GM12878 (cell line): ENCODE measurements at regions of chr18 and their contacts with region 1.

Region 1: GRCh38 chr18:70082430-70082829 is 123.1 kb downstream of the RTTN start:
- DNase-seq: no peak
- ATAC-seq: no peak
- H3K4me3 ChIP-seq: no peak overlapping the region
- H3K27ac ChIP-seq: no peak overlapping the region
- H3K4me1 ChIP-seq: no peaks in the 10 kb centered on the region
- H3K27me3 ChIP-seq: no peaks in the 10 kb centered on the region
- CTCF ChIP-seq: no peak
- EP300 ChIP-seq: no peak
- POLR2A ChIP-seq: no peak
- RAD21 ChIP-seq: no peak

Region 2: DNA sequence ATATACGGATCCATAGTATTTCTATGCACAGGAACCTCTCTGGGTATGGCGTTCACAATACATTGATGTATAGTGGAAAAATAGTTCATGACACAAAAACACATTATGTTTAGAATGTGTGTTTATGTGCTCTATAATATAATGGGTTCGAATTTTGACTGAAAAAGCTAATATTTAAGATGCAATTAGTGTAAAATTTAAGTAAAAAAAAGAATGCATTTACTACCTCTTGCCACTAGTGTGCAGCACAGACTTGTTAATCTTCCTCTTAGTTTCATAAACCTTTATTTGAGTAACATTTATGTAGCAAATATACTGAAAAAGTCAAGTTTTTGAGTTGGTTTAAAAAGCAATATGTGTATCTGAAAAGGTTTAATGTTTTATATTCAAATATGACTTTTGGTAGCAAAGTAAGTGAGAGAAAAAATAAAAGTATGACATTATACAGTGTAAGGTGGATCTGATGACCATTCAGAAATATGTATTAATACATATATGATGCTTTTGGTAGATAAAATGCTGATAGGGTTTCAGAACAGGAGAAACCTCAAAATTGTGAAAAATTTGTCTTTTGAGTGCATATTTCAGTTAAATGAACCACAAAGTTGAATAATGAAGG is 1235.1 kb before region 1 on chr18:
- CTCF ChIA-PET with region 1: interaction called, 7 read pairs
- POLR2A ChIA-PET with region 1: no interaction called
- RAD21 ChIA-PET with region 1: no interaction called
- SMC1A ChIA-PET with region 1: interaction called, 8 read pairs
- in situ Hi-C with region 1: no loop called
- intact Hi-C with region 1: loop called (anchors 2 kb)
- DNase-seq: no peak
- ATAC-seq: peak; percentile 33; the same call in 1 of the 3 replicates
- H3K4me3 ChIP-seq: no peak overlapping the region
- H3K27ac ChIP-seq: no peak overlapping the region
- H3K4me1 ChIP-seq: no peaks in the 10 kb centered on the region
- H3K27me3 ChIP-seq: no peaks in the 10 kb centered on the region
- CTCF ChIP-seq: peak; percentile 46 to 64 (median 50); a peak in 4 of 6 replicates
- EP300 ChIP-seq: no peak
- POLR2A ChIP-seq: no peak
- RAD21 ChIP-seq: peak; percentile 67

Region 3: GRCh38 chr18:68925268-68925667 is 1157.2 kb before region 1 on chr18:
- CTCF ChIA-PET with region 1: interaction called, 13 read pairs
- POLR2A ChIA-PET with region 1: no interaction called
- RAD21 ChIA-PET with region 1: interaction called, 5 read pairs
- SMC1A ChIA-PET with region 1: interaction called, 13 read pairs
- in situ Hi-C with region 1: no loop called
- intact Hi-C with region 1: loop called (anchors 10 kb)
- DNase-seq: no peak
- ATAC-seq: peak; percentile 94
- H3K4me3 ChIP-seq: no peak overlapping the region
- H3K27ac ChIP-seq: no peak overlapping the region
- H3K4me1 ChIP-seq: no peaks in the 10 kb centered on the region
- H3K27me3 ChIP-seq: no peaks in the 10 kb centered on the region; a peak in 1 of 4 replicates
- CTCF ChIP-seq: peak; percentile 27 to 61 (median 46); a peak in 4 of 6 replicates
- EP300 ChIP-seq: no peak
- POLR2A ChIP-seq: no peak
- RAD21 ChIP-seq: peak; percentile 68

Region 4: DNA sequence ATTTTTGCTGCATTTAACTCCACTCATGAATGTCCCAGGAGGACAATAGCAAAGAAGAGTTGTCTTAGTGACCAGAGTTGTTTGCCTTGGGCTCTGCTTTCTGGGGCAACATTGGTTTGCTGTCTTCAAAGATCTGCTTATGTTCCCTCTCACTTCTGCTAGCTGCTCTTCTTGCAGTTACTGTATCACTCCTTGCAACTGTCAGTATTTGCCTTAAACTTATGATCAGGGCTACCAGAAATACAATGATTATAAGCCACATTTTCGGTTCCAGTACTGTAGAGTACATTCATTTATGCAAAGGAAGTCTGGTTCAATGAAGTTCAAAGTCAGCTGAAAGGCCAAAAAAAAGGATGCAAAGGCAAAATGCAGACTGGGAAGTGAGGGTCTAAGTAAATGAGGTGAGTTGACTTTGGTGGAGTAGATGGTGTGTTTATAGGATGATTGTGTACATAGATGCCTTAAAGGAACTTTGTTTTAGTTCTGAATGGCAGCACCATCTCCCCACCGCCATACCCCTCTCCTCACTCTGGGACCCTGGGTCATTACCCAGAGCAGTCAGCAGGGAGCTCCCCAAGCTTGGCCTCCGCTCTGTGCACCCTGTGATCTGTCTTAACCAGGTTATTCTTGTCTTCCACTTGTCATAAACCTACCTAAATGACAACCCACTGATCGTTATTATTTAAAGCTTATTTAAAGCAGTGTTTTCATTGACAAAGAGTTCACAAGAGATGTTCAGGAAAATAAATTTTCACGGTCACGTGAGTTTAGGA is 445.7 kb before region 1 on chr18:
- CTCF ChIA-PET with region 1: interaction called, 25 read pairs
- POLR2A ChIA-PET with region 1: no interaction called
- RAD21 ChIA-PET with region 1: interaction called, 7 read pairs
- SMC1A ChIA-PET with region 1: interaction called, 11 read pairs
- in situ Hi-C with region 1: no loop called
- intact Hi-C with region 1: loop called (anchors 2 kb)
- DNase-seq: no peak
- ATAC-seq: peak; percentile 95
- H3K4me3 ChIP-seq: no peak overlapping the region
- H3K27ac ChIP-seq: no peak overlapping the region
- H3K4me1 ChIP-seq: no peaks in the 10 kb centered on the region
- H3K27me3 ChIP-seq: no peaks in the 10 kb centered on the region
- CTCF ChIP-seq: peak; percentile 41 to 48 (median 45)
- EP300 ChIP-seq: no peak
- POLR2A ChIP-seq: no peak
- RAD21 ChIP-seq: peak; percentile 80

Region 5: DNA sequence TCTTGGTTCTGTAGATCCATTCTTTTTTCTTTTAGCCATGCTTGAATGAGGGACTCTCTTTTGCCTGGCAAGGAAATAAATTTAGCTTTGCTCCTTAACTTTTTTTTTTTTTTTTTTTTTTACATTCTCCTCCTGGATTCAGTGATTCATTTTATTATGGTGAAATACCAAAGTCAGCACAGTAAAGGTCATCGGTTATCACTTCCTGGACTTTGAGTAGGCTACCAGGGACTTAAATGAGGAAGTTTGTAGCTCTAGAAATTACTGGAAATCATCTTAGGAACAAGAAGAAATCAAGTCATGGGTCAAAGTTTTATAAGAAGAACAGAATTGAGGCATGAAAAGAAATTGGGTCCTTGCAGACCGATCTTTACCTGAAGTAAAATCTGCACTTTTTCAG is 281.4 kb after region 1 on chr18:
- CTCF ChIA-PET with region 1: no interaction called
- POLR2A ChIA-PET with region 1: no interaction called
- RAD21 ChIA-PET with region 1: no interaction called
- SMC1A ChIA-PET with region 1: no interaction called
- in situ Hi-C with region 1: no loop called
- intact Hi-C with region 1: no loop called
- DNase-seq: no peak
- ATAC-seq: no peak
- H3K4me3 ChIP-seq: no peak overlapping the region
- H3K27ac ChIP-seq: no peak overlapping the region
- H3K4me1 ChIP-seq: no peaks in the 10 kb centered on the region
- H3K27me3 ChIP-seq: no peaks in the 10 kb centered on the region; a peak in 1 of 4 replicates
- CTCF ChIP-seq: no peak
- EP300 ChIP-seq: no peak
- POLR2A ChIP-seq: no peak
- RAD21 ChIP-seq: no peak

Region 6: GRCh38 chr18:70454704-70455322 is 372.4 kb after region 1 on chr18:
- CTCF ChIA-PET with region 1: no interaction called
- POLR2A ChIA-PET with region 1: no interaction called
- RAD21 ChIA-PET with region 1: interaction called, 4 read pairs
- SMC1A ChIA-PET with region 1: interaction called, 5 read pairs
- in situ Hi-C with region 1: no loop called
- intact Hi-C with region 1: loop called (anchors 5 kb)
- DNase-seq: no peak
- ATAC-seq: peak; percentile 87
- H3K4me3 ChIP-seq: no peak overlapping the region
- H3K27ac ChIP-seq: no peak overlapping the region
- H3K4me1 ChIP-seq: no peaks in the 10 kb centered on the region
- H3K27me3 ChIP-seq: no peaks in the 10 kb centered on the region; a peak in 1 of 4 replicates
- CTCF ChIP-seq: peak; percentile 64 to 72 (median 70); a peak in 5 of 6 replicates
- EP300 ChIP-seq: no peak
- POLR2A ChIP-seq: no peak
- RAD21 ChIP-seq: peak; percentile 68